ENCODE measurements at regions of chr9 and their contacts with region 1.

Region 1: GRCh38 chr9:127589955-127590370 is 22.1 kb upstream of the STXBP1 start:
- DNase-seq: peak; percentile 84
- ATAC-seq: peak; percentile 73

Region 2: DNA sequence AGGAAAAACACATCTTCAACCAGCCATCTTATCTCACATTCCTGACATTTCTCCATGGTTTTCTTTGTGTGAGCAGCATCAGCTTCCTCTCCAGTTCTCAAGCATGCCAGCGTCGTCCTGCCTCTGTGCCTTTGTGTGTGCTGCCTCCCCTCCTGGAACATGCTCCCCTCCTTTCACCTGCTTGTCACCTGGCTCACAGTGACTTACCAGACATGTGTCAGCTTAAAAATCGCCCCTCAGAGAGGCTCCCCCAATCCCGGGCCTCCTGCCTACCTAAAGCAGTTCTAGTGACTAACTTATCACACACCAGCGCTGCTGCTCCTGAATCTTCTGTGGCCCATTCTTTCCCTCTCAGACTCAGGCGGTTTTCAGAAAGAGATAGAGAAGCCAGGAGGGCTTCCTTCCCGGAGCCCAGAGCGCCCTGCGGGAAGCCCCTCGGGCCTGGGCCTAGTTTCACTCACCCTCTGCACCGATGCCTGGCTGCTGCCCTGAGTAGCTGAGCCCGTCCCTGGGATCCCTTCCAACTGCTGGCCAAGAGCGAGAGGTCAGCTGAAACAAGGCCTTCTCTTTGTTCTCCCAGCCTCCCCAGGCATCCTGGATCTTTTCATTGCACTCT is 1314.5 kb before region 1 on chr9:
- intact Hi-C with region 1: no loop called
- DNase-seq: no peak
- ATAC-seq: no peak

Region 3: GRCh38 chr9:127503947-127504782 is 85.8 kb before region 1 on chr9:
- intact Hi-C with region 1: loop called (anchors 1 kb)
- DNase-seq: peak; percentile 93
- ATAC-seq: peak; percentile 86

Region 4: DNA sequence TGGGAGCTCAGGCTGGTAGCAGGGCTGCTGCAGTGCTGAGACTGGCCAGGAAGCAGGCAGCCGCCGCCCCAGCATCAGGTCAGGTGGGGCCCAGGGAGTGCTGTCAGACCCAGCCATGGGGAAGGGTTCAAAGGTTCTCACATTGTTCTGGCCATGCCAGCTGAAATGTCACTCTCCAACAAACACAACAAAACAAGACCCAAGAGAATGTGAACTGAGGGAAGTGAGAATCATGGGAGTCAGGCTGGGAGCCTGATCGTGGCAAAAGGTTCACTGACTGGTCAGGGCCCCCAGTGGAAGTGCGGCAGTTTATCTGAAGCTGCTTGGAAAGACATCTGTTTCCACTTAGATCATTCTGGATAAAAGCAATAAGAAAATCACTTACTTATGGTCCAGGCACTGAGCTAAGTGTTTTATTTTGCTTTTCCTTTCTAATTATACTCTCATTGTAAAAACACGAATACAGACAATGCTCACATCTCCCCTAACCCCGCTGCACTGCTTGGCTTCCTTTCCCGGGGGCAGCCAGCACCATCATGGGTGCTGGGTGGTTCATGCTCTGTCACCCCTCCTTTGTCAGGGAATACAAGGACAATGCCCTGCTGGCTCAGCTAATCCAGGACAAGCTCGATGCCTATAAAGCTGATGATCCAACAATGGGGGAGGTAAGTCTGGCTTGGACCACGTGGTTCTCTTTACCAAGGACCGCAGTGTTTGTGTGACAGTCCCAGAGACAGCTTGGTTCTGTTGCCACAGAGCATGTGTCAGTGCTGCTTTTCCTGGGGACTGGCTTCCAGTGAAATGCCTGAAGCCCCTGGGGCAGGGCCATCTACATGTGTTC is 74.9 kb after region 1 on chr9:
- intact Hi-C with region 1: no loop called
- DNase-seq: peak; percentile 60
- ATAC-seq: peak; percentile 81

Region 5: GRCh38 chr9:127921557-127922120 is 331.7 kb after region 1 on chr9:
- intact Hi-C with region 1: loop called (anchors 5 kb)
- DNase-seq: peak; percentile 89
- ATAC-seq: peak; percentile 60